ENCODE measurements at regions of chr6 and their contacts with region 1.

Region 1: DNA sequence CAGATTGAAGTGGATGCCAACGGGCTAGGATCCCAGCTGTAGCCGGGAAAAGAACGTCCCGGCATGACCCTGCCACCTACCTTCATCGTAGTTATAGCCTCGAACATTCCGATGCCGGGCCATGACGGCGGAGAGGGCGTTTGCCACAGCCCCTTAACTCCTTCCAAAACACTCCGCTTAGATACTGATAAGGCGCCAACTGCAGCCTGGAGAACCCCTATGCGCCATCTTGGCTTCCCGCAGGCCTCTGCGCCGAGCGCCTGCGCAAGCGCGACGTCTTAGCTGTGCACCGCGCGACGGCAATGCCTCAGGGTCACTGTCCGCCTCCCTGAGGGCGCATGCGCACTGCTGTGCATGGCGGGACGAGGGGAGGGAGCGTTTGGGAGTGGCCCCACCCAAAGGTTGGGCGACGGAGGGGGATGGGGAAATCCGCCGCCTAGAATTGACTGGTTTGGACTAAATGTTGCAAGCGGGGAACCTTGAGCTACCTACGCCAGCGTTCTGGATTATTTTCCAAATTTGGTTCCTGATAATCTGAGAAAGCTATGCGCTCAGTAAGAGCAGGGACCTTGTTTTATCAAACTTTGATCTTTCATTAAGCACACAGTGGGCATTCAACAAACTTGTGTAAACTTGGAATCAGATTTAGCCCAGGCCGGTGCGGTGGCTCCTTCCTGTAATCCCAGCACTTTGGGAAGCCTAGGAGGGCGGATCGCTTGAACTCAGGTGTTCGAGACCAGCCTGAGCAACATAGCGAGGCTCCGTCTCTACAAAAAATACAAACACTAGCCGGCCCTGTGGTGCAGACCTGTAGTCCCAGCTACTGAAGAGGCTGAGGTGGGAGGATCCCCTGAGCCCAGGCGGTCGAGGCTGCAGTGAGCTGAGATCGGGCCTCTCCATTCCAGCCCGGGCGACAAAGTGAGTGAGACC is at the start of gene HBS1L:
- DNase-seq: peak; percentile 97
- ATAC-seq: peak; percentile 99
- H3K4me3 ChIP-seq: peak within 1 kb of the TSS; percentile 99 to 100
- H3K27ac ChIP-seq: peak within 1 kb of the TSS; percentile 98
- H3K4me1 ChIP-seq: peaks cover 19% of the 10 kb centered on the region
- H3K27me3 ChIP-seq: no peaks in the 10 kb centered on the region
- CTCF ChIP-seq: no peak
- total RNA-seq, gene HBS1L: 79.2 TPM

Region 2: GRCh38 chr6:135044639-135045038 is 10.2 kb before region 1 on chr6:
- CTCF ChIA-PET with region 1: no interaction called
- POLR2A ChIA-PET with region 1: interaction called, 13 read pairs
- in situ Hi-C with region 1: no loop called
- intact Hi-C with region 1: no loop called
- DNase-seq: no peak
- ATAC-seq: no peak
- H3K4me3 ChIP-seq: no peak overlapping the region
- H3K27ac ChIP-seq: no peak overlapping the region
- H3K4me1 ChIP-seq: no peaks in the 10 kb centered on the region
- H3K27me3 ChIP-seq: no peaks in the 10 kb centered on the region
- CTCF ChIP-seq: no peak

Region 3: GRCh38 chr6:135180542-135181332 is 125.9 kb after region 1 on chr6 and contains the start of gene MYB:
- CTCF ChIA-PET with region 1: no interaction called
- POLR2A ChIA-PET with region 1: no interaction called
- in situ Hi-C with region 1: no loop called
- intact Hi-C with region 1: loop called (anchors 10 kb)
- DNase-seq: no peak
- ATAC-seq: peak; percentile 84
- H3K4me3 ChIP-seq: peak within 1 kb of the TSS; percentile 67 to 78
- H3K27ac ChIP-seq: peak within 1 kb of the TSS; percentile 51; the same call in 1 of the 2 replicates
- H3K4me1 ChIP-seq: peaks cover 3% of the 10 kb centered on the region
- H3K27me3 ChIP-seq: peaks cover 35% of the 10 kb centered on the region
- CTCF ChIP-seq: no peak
- total RNA-seq, gene MYB: 1.3 TPM

Region 4: DNA sequence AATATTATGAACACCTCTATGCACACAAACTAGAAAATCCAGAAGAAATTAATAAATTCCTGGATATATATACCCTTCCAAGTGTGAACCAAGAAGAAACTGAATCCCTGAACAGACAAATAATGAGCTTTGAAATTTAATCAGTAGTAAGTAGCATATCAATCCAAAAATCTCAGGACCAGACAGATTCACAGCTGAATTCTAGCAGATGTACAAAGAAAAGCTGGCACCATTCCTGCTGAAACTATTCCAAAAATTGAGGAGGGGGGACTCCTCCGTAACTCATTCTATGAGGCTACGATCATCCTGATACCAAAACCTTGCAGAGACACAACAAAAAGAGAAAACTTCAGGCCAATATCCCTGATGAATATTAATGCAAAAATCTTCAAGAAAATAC is 729.7 kb after region 1 on chr6:
- CTCF ChIA-PET with region 1: no interaction called
- POLR2A ChIA-PET with region 1: no interaction called
- in situ Hi-C with region 1: no loop called
- intact Hi-C with region 1: no loop called
- DNase-seq: no peak
- ATAC-seq: no peak
- H3K4me3 ChIP-seq: no peak overlapping the region
- H3K27ac ChIP-seq: no peak overlapping the region
- H3K4me1 ChIP-seq: no peaks in the 10 kb centered on the region
- H3K27me3 ChIP-seq: no peaks in the 10 kb centered on the region
- CTCF ChIP-seq: no peak

Measured in Panc1 (cell line).